ENCODE measurements at regions of chr10 and their contacts with region 1.

Region 1: DNA sequence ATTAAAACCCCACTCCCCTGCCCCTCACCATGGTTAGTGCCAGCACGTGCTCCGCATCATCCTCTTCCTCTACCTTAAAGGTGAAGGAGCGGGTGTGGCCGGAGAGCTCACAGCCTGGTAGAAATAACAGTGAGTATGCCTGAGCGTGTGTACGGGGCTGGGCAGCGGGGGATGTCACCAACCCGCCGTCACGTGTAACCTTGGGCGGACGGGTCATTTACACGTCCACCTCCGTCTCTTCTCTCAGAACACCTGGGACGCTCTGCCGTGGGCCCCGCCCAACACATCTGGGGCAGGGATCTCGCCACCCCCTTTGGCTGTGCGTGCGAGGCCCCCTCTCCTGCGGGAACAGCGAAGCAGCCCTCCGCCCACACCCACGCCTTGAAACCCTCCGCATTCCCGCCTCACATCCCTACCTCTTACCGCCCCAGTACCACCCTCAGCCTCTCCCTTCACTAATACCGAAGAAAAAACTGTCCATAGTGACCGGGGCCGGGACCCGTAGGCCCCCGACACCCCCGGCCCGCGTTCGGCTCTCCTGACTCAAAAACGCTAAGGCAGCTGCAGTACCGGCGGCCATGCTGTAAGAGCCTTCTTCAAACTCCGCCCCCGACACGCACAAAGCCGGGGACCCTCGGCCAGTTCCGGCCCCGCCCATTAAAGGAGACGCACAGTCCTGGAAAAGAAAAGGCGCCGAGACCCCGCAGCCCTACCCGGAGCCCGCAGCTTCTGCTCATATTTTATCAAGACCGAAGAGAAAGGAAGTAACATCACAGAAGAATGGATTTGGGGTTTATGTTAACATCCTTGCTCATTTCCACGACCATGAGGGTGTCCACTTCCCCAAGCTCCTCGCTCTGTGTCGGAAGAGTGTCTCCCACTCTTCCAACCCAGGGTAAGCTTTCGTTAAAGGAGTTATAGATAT is at the start of gene NPM3:
- DNase-seq: peak; percentile 91
- CTCF ChIP-seq: no peak

Region 2: DNA sequence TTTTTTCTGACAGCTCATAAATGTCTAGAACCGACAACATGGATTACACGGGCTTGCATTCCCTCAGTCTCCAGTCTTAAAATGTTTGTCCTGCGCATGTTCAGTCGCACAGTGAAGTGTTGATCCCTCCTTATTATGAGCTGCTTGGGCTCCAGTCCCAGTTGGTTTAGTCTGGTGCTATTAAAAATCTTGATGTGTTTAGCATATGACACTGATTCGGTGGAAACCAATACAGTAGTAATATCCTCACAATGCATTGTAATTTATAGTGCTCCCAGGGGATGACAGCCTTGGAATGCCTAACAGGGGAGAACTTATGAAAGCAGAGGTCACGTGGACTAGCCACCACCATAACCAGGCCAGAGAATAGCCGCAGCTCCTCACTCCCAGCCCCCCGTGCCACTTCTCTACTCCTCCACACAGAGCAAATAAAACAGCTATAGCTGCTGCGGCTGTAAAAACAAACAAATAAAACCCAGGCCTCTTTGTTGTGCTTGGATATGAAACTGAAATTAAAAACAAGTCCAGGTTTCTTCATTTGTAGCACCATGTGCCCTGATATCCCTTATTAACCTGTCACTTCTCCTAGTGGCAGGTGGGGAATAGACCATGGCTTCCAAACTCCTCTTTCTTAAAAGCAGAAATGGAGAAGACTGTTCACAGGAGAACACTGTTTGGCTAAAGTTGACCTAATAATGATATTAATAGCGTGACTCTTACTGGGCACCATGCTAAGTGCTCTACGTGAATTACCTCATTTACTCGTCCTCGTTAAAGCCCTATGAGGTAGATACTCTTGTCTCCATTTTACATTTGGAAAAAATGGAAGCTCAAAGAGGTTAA is 187.3 kb before region 1 on chr10:
- CTCF ChIA-PET with region 1: interaction called, 331 read pairs
- POLR2A ChIA-PET with region 1: no interaction called
- DNase-seq: no peak
- CTCF ChIP-seq: no peak

Region 3: GRCh38 chr10:101617102-101617823 is 165.8 kb before region 1 on chr10:
- CTCF ChIA-PET with region 1: interaction called, 331 read pairs
- POLR2A ChIA-PET with region 1: no interaction called
- DNase-seq: peak; percentile 75
- CTCF ChIP-seq: peak; percentile 14

Region 4: GRCh38 chr10:101769541-101770180 is 13.4 kb before region 1 on chr10:
- CTCF ChIA-PET with region 1: interaction called, 39 read pairs
- POLR2A ChIA-PET with region 1: no interaction called
- DNase-seq: no peak
- CTCF ChIP-seq: no peak

Region 5: DNA sequence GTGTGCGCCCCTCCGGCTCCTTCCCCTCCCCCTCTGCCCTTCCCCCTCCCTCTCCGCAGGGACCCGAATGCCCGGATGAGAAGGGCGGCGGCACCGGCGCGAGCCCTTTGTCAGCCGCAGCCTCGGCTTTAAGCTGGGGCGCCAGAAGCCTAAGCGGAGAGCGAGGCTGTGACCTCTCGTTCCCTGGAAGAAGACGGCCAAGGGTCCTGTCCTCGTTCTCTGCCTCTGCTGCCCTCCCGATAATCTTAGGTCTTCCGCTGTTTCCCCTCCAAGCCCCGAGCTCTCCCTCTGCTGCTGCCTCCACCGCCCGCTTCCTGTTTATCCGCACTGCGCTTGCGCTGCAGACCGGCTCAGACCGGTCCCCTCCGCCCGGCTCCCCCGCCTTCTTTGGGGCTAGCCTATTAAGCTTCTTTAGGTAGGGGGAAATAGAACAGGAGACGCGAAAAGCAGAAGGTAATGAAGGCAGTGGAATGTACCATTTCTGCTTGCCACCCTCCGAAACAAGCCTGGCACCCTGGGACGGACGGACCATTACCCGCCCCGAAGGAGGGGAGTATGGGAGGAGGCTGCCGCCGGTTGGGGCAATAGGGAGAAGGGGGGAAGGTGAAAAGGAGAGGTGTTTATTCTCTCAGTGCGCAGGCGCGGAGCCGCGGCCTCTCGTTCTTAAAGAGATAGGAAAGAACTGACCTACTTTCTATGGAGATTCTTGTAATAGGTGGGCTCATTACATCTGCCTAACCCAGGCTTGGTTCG is 35.2 kb after region 1 on chr10 and contains the start of gene OGA:
- CTCF ChIA-PET with region 1: interaction called, 11 read pairs
- POLR2A ChIA-PET with region 1: interaction called, 3 read pairs
- DNase-seq: peak; percentile 94
- CTCF ChIP-seq: no peak

Region 6: DNA sequence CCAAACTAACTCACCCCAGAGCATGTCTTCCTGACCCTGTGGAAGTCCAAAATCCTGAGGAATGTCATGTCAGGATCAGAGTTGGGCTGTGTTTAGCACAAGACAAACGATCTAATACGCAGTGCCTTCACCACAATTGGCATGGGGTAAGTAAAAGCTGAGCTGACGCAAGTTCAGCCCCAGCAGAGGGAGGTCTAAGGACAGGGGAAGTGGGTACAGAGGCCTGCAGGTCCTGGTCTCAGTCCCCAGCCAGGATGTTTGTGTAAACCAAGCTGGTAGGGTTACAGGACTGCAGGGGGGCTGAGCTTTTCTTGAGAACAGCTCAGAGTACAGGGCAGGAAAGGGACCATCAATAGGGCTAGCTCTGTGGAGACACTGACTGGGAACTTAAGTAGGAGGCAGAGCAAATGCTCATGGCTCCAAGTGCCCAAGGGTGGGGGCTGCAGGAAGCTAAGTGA is 65.8 kb after region 1 on chr10:
- CTCF ChIA-PET with region 1: no interaction called
- POLR2A ChIA-PET with region 1: no interaction called
- DNase-seq: no peak
- CTCF ChIP-seq: no peak

Region 7: DNA sequence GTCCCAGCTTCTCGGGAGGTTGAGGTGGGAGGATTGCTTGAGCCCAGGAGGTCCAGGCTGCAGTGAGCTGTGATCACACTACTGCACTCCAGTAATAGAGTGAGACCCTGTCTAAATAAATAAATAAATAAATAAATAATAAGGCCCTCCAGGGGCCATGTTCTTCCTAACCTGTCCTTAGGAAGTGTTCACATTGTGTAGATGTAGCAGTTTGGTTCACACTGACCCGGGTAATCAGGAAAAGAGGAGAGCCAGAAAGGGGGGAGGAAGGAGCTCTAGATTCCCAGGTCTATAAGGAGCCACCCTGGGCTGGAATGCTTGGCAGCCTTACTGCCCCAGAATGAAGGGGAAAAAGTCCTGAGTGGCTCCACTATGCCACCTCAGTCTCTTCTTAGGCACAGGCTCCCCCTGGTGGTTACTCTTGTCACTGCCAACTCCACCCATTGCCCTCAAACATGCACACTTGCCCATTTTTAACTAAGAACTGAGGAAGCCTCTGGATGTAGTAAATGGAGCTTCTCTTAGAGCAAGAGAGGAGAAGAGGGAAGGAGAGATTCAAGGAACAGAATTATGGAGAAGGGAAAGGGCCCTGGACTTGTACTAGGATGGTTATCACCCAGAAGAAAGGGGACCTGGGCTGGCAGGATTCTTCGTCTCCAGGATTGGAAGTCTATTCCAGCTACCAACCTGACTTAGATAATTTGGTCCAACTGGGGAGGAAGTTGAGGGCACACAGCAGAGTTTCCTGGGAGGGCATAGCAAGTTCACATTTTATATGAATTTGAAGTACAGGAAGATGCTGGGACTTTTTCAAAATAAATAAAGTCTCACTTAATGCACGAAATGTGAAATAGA is 289.8 kb after region 1 on chr10:
- CTCF ChIA-PET with region 1: interaction called, 11 read pairs
- POLR2A ChIA-PET with region 1: no interaction called
- DNase-seq: peak; percentile 83
- CTCF ChIP-seq: peak; percentile 88